Tibial artery (tissue), 4 donors: ENCODE measurements at regions of chr5 and their contacts with region 1.

Region 1: DNA sequence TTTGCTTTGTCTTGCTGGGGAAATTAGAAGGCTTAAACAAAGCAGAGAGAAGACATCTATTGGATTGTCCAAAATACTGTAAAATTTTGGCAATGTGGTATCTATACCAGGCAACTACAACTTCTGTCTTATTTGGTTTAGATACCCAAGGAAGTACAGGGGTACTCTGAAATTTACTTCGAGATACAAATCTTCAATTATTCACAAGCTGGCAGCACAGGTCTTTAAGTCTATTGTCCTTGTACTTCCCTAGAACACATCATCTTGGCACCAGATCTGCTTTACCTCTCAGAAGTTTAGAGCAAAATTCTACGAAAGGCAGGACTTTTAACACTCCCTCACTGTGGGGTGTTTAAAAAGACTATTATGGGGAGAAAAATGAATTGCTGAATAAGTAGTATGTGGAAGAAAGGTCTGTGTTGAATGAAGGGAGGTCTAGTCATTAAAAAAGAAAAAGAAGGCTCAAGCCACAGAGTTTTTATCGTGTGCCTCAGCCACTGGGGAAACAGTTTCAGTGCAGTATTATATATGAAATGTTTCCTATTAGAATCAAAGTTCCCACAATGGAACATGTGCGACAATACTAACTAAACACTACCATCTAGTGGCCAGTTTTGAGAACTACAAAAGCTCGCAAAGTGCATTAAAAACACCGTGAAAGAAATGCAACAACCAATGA is 93.7 kb downstream of the PDE4D start:
- DNase-seq: no peak
- H3K4me3 ChIP-seq: no peak overlapping the region
- H3K27ac ChIP-seq: peak overlapping the region in 1 of 2 donors; percentile 34
- H3K4me1 ChIP-seq: peaks cover 0 to 34% (median 13%) of the 10 kb centered on the region in 4 donors
- H3K27me3 ChIP-seq: no peaks in the 10 kb centered on the region
- CTCF ChIP-seq: peak; percentile 71 to 85

Region 2: DNA sequence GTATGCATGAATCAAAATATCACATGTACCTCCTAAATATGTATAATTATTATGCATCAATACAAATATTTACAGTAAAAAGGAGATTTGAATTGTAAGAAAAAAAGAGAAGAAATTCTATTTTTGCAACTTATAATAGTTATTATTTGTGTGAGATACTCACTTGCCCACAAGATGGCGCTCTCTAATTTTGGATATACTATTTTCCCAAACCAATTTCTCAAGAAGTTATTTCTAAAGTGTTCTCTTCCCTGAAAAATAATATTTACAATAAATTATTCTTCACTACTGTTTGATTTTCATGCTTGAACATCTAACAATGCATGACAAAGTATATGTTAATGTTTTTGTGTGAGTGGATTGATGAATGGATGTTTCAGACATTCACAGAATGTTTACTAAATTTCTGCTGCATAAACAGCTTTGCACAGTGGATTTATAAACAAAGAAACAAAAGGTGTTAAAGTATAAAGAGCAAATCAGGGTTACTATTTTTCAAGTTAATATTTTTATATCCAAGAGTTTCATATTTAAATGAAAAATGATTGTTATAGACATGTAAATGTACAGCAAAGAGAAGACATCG is 409.6 kb before region 1 on chr5:
- intact Hi-C with region 1: loop called (anchors 5 kb)
- DNase-seq: no peak
- H3K4me3 ChIP-seq: no peak overlapping the region
- H3K27ac ChIP-seq: peak overlapping the region in 1 of 2 donors; percentile 42
- H3K4me1 ChIP-seq: no peaks in the 10 kb centered on the region
- H3K27me3 ChIP-seq: no peaks in the 10 kb centered on the region
- CTCF ChIP-seq: peak; percentile 58 to 59

Region 3: DNA sequence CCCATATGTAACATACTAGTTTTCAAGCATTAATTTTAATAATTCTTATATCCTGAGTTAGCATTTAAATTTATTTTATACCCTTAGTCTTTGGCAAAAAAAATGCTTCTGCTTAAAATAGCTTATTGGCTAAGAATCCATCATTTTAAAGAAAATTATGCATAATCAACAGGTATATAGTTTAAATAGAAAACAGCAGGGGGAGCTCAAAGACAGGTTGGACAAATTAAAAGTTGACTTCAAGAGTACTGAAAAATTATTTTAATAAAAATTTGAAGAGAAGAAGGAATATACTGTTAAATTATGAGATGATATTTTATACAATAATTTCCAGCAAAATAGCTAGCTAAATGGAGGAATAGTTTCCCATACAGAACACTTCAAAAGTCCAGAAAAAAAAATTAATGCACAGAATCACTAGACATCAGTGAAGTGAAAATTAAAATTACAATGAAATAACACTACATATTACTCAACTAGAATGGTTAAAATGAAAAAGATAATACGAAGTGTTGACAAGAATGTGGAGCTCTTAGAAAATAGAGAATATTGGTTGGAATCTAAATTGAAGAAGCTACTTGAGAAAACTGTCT is 293.4 kb before region 1 on chr5:
- intact Hi-C with region 1: loop called (anchors 5 kb)
- DNase-seq: no peak
- H3K4me3 ChIP-seq: no peak overlapping the region
- H3K27ac ChIP-seq: no peak overlapping the region
- H3K4me1 ChIP-seq: no peaks in the 10 kb centered on the region
- H3K27me3 ChIP-seq: no peaks in the 10 kb centered on the region
- CTCF ChIP-seq: peak; percentile 43 to 53

Region 4: GRCh38 chr5:59660737-59661136 is 139.1 kb before region 1 on chr5:
- intact Hi-C with region 1: loop called (anchors 10 kb)
- DNase-seq: no peak
- H3K4me3 ChIP-seq: no peak overlapping the region
- H3K27ac ChIP-seq: peak overlapping the region; percentile 54 to 62
- H3K4me1 ChIP-seq: peaks cover 0 to 65% (median 12%) of the 10 kb centered on the region in 4 donors
- H3K27me3 ChIP-seq: no peaks in the 10 kb centered on the region
- CTCF ChIP-seq: peak in 1 of 2 experiments; percentile 27

Region 5: DNA sequence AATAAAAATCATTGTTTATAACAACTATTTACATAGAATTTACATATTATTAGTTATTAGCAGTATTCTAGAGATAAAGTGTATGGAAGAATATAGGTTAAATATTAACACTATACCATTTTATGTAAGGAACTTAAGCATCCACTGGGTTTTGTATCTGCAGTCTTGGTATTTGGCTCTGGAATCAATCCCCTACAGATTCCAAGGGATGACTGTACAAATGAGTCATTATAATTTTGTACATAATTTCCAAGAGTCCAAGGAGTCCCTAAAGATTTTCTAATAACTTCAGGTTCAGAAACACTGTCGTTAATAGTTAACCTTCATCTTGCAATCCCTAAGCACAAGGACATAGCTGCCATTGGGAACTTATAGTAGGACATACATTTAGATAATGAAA is 348.5 kb after region 1 on chr5:
- intact Hi-C with region 1: no loop called
- DNase-seq: no peak
- H3K4me3 ChIP-seq: no peak overlapping the region
- H3K27ac ChIP-seq: no peak overlapping the region
- H3K4me1 ChIP-seq: peaks cover 0 to under 1% (median 0%) of the 10 kb centered on the region in 4 donors
- H3K27me3 ChIP-seq: no peaks in the 10 kb centered on the region
- CTCF ChIP-seq: no peak